Naive thymus-derived CD4-positive, alpha-beta T cell (primary cell): ENCODE measurements at regions of chr6 and their contacts with region 1.

Region 1: GRCh38 chr6:2765166-2765895 is at the start of gene WRNIP1:
- DNase-seq: peak; percentile 89 to 97 (median 97)
- ATAC-seq: peak; percentile 90
- H3K4me3 ChIP-seq: peak within 1 kb of the TSS; percentile 76
- H3K4me3 Mint-ChIP-seq: peak within 1 kb of the TSS; percentile 86 to 96 (median 94)
- H3K27ac ChIP-seq: peak within 1 kb of the TSS; percentile 88
- H3K27ac Mint-ChIP-seq: peak within 1 kb of the TSS; percentile 89 to 100 (median 99)
- H3K4me1 ChIP-seq: peaks cover 30 to 31% of the 10 kb centered on the region in 2 donors
- H3K4me1 Mint-ChIP-seq: peaks cover 27 to 54% (median 50%) of the 10 kb centered on the region in 7 donors
- H3K27me3 ChIP-seq: no peaks in the 10 kb centered on the region
- H3K27me3 Mint-ChIP-seq: no peaks in the 10 kb centered on the region
- total RNA-seq, gene WRNIP1: 31.2 to 47.6 (median 37.8) TPM

Region 2: GRCh38 chr6:2738373-2738979 is 26.9 kb before region 1 on chr6:
- CTCF ChIA-PET with region 1: interaction called, 3 read pairs
- POLR2A ChIA-PET with region 1: no interaction called
- intact Hi-C with region 1: loop called (anchors 1 kb)
- DNase-seq: peak in 8 of 9 donors; percentile 27 to 59 (median 50)
- ATAC-seq: peak; percentile 72
- H3K4me3 ChIP-seq: no peak overlapping the region
- H3K4me3 Mint-ChIP-seq: no peak overlapping the region
- H3K27ac ChIP-seq: no peak overlapping the region
- H3K27ac Mint-ChIP-seq: no peak overlapping the region
- H3K4me1 ChIP-seq: no peaks in the 10 kb centered on the region
- H3K4me1 Mint-ChIP-seq: peaks cover 0 to 5% (median 0%) of the 10 kb centered on the region in 7 donors
- H3K27me3 ChIP-seq: no peaks in the 10 kb centered on the region
- H3K27me3 Mint-ChIP-seq: peaks cover 0 to 21% (median 0%) of the 10 kb centered on the region in 5 donors

Region 3: GRCh38 chr6:2791124-2791974 is 26.0 kb after region 1 on chr6:
- CTCF ChIA-PET with region 1: interaction called, 3 read pairs
- POLR2A ChIA-PET with region 1: no interaction called
- intact Hi-C with region 1: loop called in 1 of 2 experiments (anchors 2 kb)
- DNase-seq: peak in 8 of 9 donors; percentile 10 to 61 (median 53)
- ATAC-seq: peak; percentile 73
- H3K4me3 ChIP-seq: no peak overlapping the region
- H3K4me3 Mint-ChIP-seq: peak overlapping the region in 8 of 10 donors; percentile 12 to 71 (median 56)
- H3K27ac ChIP-seq: no peak overlapping the region
- H3K27ac Mint-ChIP-seq: peak overlapping the region; percentile 29 to 90 (median 81)
- H3K4me1 ChIP-seq: peaks cover 15 to 19% of the 10 kb centered on the region in 2 donors
- H3K4me1 Mint-ChIP-seq: peaks cover 29 to 44% (median 36%) of the 10 kb centered on the region in 7 donors
- H3K27me3 ChIP-seq: no peaks in the 10 kb centered on the region
- H3K27me3 Mint-ChIP-seq: no peaks in the 10 kb centered on the region

Region 4: DNA sequence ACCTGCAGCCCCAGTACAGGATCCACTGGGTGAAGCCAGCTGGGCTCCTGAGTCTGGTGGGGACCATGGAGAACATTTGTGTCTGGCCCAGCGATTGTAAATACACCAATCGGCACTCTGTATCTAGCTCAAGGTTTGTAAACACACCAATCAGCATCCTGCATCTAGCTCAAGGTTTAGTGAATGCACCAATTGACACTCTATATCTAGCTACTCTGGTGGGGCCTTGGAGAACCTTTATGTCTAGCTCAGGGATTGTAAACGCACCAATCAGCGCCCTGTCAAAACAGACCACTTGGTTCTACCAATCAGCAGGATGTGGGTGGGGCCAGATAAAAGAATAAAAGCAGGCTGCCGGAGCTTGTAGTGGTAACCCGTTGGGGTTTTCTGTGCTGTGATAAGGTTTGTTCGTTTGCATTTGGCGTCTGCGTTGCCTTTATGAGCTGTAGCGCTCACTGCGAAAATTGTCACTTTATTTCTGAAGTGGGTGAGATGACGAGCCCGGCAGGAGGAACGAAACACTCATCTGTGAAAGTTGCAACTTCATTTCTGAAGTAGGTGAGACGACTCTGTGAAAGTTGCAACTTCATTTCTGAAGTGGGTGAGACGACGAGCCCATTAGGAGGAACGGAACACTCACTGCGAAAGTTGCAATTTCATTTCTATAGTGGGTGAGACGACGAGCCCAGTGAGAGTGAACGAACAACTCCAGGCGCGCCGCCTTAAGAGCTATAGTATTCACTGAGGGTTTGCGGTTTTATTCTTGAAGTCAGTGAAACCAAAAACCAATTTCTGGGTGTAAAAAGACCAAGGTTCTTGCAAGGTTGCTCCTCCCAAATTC is 174.9 kb after region 1 on chr6:
- CTCF ChIA-PET with region 1: interaction called, 3 read pairs
- POLR2A ChIA-PET with region 1: interaction called, 7 read pairs
- intact Hi-C with region 1: loop called (anchors 1 kb)
- DNase-seq: peak in 8 of 9 donors; percentile 70 to 90 (median 82)
- ATAC-seq: peak; percentile 81
- H3K4me3 ChIP-seq: peak overlapping the region; percentile 72
- H3K4me3 Mint-ChIP-seq: peak overlapping the region; percentile 81 to 94 (median 88)
- H3K27ac ChIP-seq: peak overlapping the region; percentile 81
- H3K27ac Mint-ChIP-seq: peak overlapping the region; percentile 93 to 100 (median 97)
- H3K4me1 ChIP-seq: peaks cover 27 to 76% of the 10 kb centered on the region in 2 donors
- H3K4me1 Mint-ChIP-seq: peaks cover 33 to 88% (median 79%) of the 10 kb centered on the region in 7 donors
- H3K27me3 ChIP-seq: no peaks in the 10 kb centered on the region
- H3K27me3 Mint-ChIP-seq: peaks cover 0 to 22% (median 0%) of the 10 kb centered on the region in 5 donors

Region 5: GRCh38 chr6:3118353-3119039 is 353.2 kb after region 1 on chr6 and contains the start of gene BPHL:
- CTCF ChIA-PET with region 1: no interaction called
- POLR2A ChIA-PET with region 1: no interaction called
- intact Hi-C with region 1: loop called (anchors 1 to 2 kb)
- DNase-seq: peak; percentile 97 to 100 (median 99)
- ATAC-seq: peak; percentile 99
- H3K4me3 ChIP-seq: peak within 1 kb of the TSS; percentile 91
- H3K4me3 Mint-ChIP-seq: peak within 1 kb of the TSS; percentile 77 to 93 (median 90)
- H3K27ac ChIP-seq: peak within 1 kb of the TSS; percentile 97
- H3K27ac Mint-ChIP-seq: peak within 1 kb of the TSS; percentile 82 to 97 (median 95)
- H3K4me1 ChIP-seq: peaks cover 0 to 4% of the 10 kb centered on the region in 2 donors
- H3K4me1 Mint-ChIP-seq: peaks cover 12 to 19% (median 18%) of the 10 kb centered on the region in 7 donors
- H3K27me3 ChIP-seq: no peaks in the 10 kb centered on the region
- H3K27me3 Mint-ChIP-seq: peaks cover 0 to 5% (median 0%) of the 10 kb centered on the region in 5 donors
- total RNA-seq, gene BPHL: 7.9 to 18.0 (median 10.0) TPM

Region 6: GRCh38 chr6:3456755-3457466 is 691.6 kb after region 1 on chr6 and contains the start of gene SLC22A23:
- CTCF ChIA-PET with region 1: no interaction called
- POLR2A ChIA-PET with region 1: no interaction called
- intact Hi-C with region 1: loop called in 1 of 2 experiments (anchors 2 kb)
- DNase-seq: peak; percentile 63 to 84 (median 78)
- ATAC-seq: peak; percentile 81
- H3K4me3 ChIP-seq: peak within 1 kb of the TSS; percentile 66
- H3K4me3 Mint-ChIP-seq: peak within 1 kb of the TSS; percentile 76 to 95 (median 86)
- H3K27ac ChIP-seq: peak within 1 kb of the TSS; percentile 61
- H3K27ac Mint-ChIP-seq: peak within 1 kb of the TSS; percentile 32 to 91 (median 73)
- H3K4me1 ChIP-seq: peaks cover 8 to 24% of the 10 kb centered on the region in 2 donors
- H3K4me1 Mint-ChIP-seq: peaks cover 4 to 17% (median 12%) of the 10 kb centered on the region in 7 donors
- H3K27me3 ChIP-seq: peaks cover 0 to 4% of the 10 kb centered on the region in 2 donors
- H3K27me3 Mint-ChIP-seq: peaks cover 0 to 47% (median 8%) of the 10 kb centered on the region in 5 donors
- total RNA-seq, gene SLC22A23: 1.1 to 23.8 (median 20.0) TPM